ENCODE measurements at regions of chr20 and their contacts with region 1.

Region 1: DNA sequence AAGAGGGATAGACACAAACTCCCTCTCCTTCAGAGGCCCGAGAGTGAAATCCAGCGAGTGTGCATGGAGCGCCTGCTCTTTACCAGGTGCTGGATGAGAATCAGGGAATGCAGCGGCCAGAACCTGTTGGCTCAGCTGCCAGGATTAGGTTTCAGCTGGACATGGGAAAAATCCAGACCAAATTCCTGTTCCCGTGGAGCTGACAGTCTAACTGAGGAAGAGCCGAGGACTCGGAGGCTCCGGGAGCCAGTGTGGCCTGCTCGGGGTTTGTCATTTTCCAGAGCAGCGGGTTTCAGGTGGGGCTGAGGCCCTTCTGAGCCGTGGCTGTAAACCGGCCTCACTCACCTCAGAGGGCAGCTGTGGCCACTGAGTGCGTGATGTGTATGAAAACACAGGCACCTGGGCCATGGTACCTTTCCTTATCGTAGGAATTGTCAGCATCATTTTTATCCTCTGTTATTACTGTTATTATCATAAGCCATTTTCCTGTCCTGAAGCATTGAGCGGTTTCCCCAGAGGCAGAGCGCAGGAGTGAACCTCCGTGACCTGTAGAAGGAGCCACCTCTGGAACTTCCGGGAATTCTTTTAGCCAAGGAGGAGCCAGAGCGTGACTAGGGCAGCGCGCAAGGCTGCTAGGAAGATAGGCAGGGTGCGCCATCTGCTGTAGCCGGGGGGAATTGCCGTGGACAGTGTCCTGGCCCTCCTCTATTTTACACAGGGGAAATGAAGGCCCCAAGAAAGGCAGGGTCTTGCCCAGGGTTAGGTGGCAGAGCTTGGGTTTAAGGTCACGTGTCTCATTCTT is 27.3 kb downstream of the PKIG start:
- DNase-seq: peak; percentile 88 to 92
- ATAC-seq: peak; percentile 78 to 92 (median 84)
- H3K4me3 ChIP-seq: no peak overlapping the region
- H3K4me3 Mint-ChIP-seq: peak overlapping the region; percentile 89
- H3K27ac ChIP-seq: peak overlapping the region; percentile 94
- H3K27ac Mint-ChIP-seq: peak overlapping the region; percentile 98 to 99
- H3K4me1 ChIP-seq: peaks cover 31% of the 10 kb centered on the region
- H3K4me1 Mint-ChIP-seq: peaks cover 22 to 32% of the 10 kb centered on the region in 2 donors
- H3K27me3 ChIP-seq: no peaks in the 10 kb centered on the region
- H3K27me3 Mint-ChIP-seq: no peaks in the 10 kb centered on the region
- CTCF ChIP-seq: peak; percentile 96

Region 2: DNA sequence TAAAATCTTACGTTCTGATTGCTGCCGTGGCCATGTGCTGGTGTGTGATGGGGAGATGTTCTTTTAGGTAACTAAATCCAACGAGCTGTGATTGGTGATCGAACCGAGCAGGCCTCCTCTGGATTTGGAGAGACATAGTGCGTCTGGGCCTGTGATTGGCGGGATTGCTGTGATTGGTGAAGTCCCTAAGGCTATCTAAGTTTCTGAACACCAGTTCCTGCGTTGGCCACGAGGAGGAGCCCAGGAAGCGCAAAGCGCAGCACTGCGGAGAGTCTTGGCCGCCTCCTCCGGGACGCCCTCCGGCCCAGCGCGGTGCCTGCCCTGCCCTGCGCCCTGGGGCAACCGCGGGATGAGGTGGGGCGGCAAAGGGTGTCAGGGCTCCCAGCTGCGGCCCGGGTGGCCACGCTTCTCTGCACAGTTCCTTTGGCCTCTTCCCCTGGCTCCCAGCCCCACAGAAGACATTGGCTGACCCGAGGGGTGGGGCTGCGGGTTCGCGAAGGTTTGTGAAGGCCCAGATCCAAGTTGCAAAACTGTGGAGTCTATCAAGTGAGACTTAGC is 221.2 kb before region 1 on chr20:
- intact Hi-C with region 1: loop called (anchors 1 kb)
- DNase-seq: peak; percentile 61 to 79
- ATAC-seq: peak; percentile 73 to 90 (median 86)
- H3K4me3 ChIP-seq: no peak overlapping the region
- H3K4me3 Mint-ChIP-seq: no peak overlapping the region
- H3K27ac ChIP-seq: no peak overlapping the region
- H3K27ac Mint-ChIP-seq: no peak overlapping the region
- H3K4me1 ChIP-seq: peaks cover 6% of the 10 kb centered on the region
- H3K4me1 Mint-ChIP-seq: peaks cover 11 to 24% of the 10 kb centered on the region in 2 donors
- H3K27me3 ChIP-seq: peaks cover 3% of the 10 kb centered on the region
- H3K27me3 Mint-ChIP-seq: peaks cover 7 to 10% of the 10 kb centered on the region in 2 donors
- CTCF ChIP-seq: peak; percentile 72

Region 3: DNA sequence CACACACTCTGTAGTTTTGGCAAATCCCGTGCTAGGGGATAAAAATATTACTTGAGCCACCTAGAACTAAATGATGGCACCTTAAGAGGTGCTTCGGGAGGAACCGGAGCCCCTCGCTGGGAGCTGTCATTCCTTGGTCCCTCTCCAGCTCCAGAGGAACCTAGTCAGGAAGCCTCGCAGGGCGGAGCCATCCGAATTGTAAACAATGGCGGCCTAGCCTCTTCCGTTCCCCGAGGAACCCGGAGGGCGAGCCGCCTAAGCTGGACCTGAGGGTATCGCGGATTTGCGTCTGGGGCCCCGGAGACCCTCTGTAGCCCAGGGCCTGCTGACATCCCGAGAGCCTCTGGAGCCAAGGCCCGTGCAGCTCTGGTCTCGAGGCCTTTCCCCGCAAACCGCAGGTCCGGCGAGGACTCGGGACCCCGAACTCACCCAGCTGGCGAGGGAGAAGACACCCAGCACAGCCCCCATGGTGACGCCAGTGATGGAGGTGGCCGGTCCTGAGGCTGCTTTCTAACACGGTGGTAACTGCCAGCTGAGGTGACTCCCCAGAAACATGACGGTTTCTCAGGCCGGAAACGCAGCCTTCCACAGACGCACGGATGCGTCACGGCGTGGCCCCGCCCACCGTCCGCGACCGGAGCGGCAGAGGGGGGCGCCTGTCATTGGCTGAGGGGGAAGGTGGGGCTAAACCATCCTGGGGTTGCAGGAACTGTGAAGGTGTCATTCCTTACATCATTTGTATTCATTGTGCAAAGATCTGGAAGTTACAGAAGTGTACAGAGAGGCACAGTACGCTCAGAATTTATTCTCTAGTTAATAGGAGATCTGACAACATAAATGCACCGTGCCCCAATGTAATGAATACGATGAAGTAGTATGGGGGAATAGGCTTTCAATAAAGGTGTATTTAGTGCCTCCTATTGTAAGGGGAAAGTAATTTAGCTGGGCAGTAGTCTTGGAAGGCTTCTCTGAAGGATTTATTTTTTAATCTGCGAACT is 87.9 kb before region 1 on chr20 and contains the start of gene SERINC3:
- intact Hi-C with region 1: loop called (anchors 1 kb)
- DNase-seq: peak; percentile 99
- ATAC-seq: peak; percentile 90 to 99 (median 91)
- H3K4me3 ChIP-seq: peak within 1 kb of the TSS; percentile 94
- H3K4me3 Mint-ChIP-seq: peak within 1 kb of the TSS; percentile 86
- H3K27ac ChIP-seq: peak within 1 kb of the TSS; percentile 96
- H3K27ac Mint-ChIP-seq: peak within 1 kb of the TSS; percentile 96 to 98
- H3K4me1 ChIP-seq: peaks cover 25% of the 10 kb centered on the region
- H3K4me1 Mint-ChIP-seq: peaks cover 46 to 55% of the 10 kb centered on the region in 2 donors
- H3K27me3 ChIP-seq: no peaks in the 10 kb centered on the region
- H3K27me3 Mint-ChIP-seq: no peaks in the 10 kb centered on the region
- CTCF ChIP-seq: no peak
- total RNA-seq, gene SERINC3: 70.1 to 89.6 (median 78.6) TPM

Region 4: GRCh38 chr20:44576297-44576696 is 33.4 kb before region 1 on chr20:
- intact Hi-C with region 1: loop called (anchors 1 kb)
- DNase-seq: peak in 1 of 2 donors; percentile 38
- ATAC-seq: peak; percentile 24 to 56 (median 50)
- H3K4me3 ChIP-seq: no peak overlapping the region
- H3K4me3 Mint-ChIP-seq: peak overlapping the region; percentile 70
- H3K27ac ChIP-seq: peak overlapping the region; percentile 31
- H3K27ac Mint-ChIP-seq: peak overlapping the region; percentile 79 to 86
- H3K4me1 ChIP-seq: peaks cover 36% of the 10 kb centered on the region
- H3K4me1 Mint-ChIP-seq: peaks cover 41 to 47% of the 10 kb centered on the region in 2 donors
- H3K27me3 ChIP-seq: no peaks in the 10 kb centered on the region
- H3K27me3 Mint-ChIP-seq: no peaks in the 10 kb centered on the region
- CTCF ChIP-seq: peak; percentile 13

Region 5: GRCh38 chr20:44651684-44652423 is 42.1 kb after region 1 on chr20 and contains the start of gene ADA:
- intact Hi-C with region 1: loop called (anchors 2 kb)
- DNase-seq: peak; percentile 40 to 70
- ATAC-seq: peak; percentile 43 to 61 (median 55)
- H3K4me3 ChIP-seq: peak within 1 kb of the TSS; percentile 64
- H3K4me3 Mint-ChIP-seq: peak within 1 kb of the TSS; percentile 93
- H3K27ac ChIP-seq: peak within 1 kb of the TSS; percentile 71
- H3K27ac Mint-ChIP-seq: peak within 1 kb of the TSS; percentile 85 to 89
- H3K4me1 ChIP-seq: peaks cover 53% of the 10 kb centered on the region
- H3K4me1 Mint-ChIP-seq: peaks cover 44 to 48% of the 10 kb centered on the region in 2 donors
- H3K27me3 ChIP-seq: no peaks in the 10 kb centered on the region
- H3K27me3 Mint-ChIP-seq: no peaks in the 10 kb centered on the region
- CTCF ChIP-seq: no peak
- total RNA-seq, gene ADA: 71.7 to 94.2 (median 73.9) TPM

Region 6: DNA sequence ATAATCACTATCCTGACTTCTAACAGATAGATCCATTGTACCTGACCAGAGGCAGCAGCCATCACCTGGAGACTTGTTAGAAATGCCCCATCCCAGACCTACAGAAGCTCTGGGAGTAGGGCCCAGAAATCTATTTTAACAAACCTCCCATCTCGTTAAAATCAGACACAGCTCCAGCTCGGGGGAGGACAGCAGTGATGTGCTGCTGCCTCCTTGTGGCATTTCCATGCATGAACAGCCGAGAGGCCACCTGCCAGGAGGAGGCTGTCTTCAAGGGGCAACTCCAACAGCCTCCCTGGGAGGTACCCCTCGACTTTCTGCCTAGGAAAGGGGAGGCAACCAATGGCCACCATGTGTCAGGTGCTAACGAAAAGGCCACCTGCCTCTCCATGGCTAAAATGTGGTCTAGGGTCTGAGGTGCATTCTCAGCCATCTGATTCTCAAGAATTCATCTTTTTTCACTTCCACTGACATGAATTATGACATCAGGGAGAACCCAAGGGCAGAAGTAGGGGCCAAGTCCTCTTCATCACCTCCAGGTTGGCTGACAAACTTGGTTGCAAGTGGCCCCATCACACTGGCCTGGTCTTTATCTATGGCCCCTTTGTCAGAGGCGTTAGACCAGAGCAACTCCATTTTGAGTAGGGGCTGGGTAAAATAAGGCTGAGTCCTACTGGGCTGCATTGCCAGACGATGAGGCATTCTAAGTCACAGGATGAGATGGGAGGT is 123.8 kb after region 1 on chr20:
- intact Hi-C with region 1: no loop called
- DNase-seq: peak; percentile 45 to 81
- ATAC-seq: peak; percentile 55 to 84 (median 80)
- H3K4me3 ChIP-seq: no peak overlapping the region
- H3K4me3 Mint-ChIP-seq: no peak overlapping the region
- H3K27ac ChIP-seq: no peak overlapping the region
- H3K27ac Mint-ChIP-seq: no peak overlapping the region
- H3K4me1 ChIP-seq: peaks cover 4% of the 10 kb centered on the region
- H3K4me1 Mint-ChIP-seq: peaks cover 12 to 20% of the 10 kb centered on the region in 2 donors
- H3K27me3 ChIP-seq: no peaks in the 10 kb centered on the region
- H3K27me3 Mint-ChIP-seq: peaks cover 4 to 7% of the 10 kb centered on the region in 2 donors
- CTCF ChIP-seq: peak; percentile 68

Region 7: GRCh38 chr20:44805979-44806620 is 196.4 kb after region 1 on chr20:
- intact Hi-C with region 1: no loop called
- DNase-seq: no peak
- ATAC-seq: no peak
- H3K4me3 ChIP-seq: no peak overlapping the region
- H3K4me3 Mint-ChIP-seq: no peak overlapping the region
- H3K27ac ChIP-seq: no peak overlapping the region
- H3K27ac Mint-ChIP-seq: no peak overlapping the region
- H3K4me1 ChIP-seq: no peaks in the 10 kb centered on the region
- H3K4me1 Mint-ChIP-seq: peaks cover 0 to 9% of the 10 kb centered on the region in 2 donors
- H3K27me3 ChIP-seq: peaks cover 19% of the 10 kb centered on the region
- H3K27me3 Mint-ChIP-seq: peaks cover 41 to 46% of the 10 kb centered on the region in 2 donors
- CTCF ChIP-seq: no peak

Measured in natural killer cell (primary cell).